Left cardiac atrium (tissue), 4 donors: ENCODE measurements at regions of chr11 and their contacts with region 1.

Region 1: DNA sequence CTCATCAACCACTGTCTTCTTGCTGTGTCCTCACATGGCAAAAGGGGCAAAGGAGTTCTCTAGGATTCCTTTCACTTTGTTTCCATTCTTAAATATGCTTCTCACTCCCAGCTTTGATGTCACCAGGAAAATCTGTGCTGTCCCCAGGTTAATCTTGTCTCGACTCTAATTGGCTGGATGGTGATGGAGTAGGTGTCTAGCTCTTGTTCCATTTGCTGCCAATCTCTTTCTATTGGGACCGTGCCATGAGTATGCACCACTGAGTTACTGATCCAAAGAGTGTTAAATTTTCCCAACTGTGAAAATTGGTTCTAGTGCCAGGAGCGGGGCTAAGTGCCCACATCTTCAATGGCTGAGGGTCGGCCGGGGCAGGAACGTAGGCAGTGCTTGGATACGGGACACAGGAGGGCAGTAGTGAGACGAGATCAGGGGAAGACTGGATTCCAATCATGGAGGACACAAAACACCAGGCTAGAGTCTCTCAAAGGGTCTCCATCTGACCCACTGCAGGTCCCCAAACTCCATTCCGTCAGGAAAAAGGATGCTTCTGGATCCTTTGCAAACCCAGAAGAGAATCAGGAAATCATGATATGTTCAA is 47.7 kb upstream of the CSNK2A3 start:
- DNase-seq: no peak
- ATAC-seq: no peak

Region 2: DNA sequence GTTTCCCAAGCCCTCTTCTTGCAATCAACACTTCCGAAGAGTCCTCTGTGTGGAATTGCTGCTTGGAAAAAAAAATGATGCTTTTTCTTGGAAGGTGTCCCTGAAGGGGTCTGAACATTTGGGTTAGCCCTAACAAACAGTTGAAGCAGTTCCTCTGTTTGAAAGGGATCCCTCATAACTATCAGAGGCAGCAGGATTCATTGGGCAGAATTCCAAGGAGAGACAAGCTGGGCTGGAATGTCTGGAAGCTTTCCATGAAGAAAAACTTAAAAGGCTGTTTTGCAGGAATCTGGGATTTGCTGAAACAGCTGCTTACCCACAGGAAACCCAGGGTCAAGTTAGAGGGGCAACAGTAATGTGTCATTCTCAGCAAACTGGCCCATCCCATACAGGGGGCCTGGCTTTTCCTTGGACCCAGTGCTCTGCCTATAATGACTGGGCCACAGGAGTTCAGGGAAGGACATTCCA is 50.8 kb before region 1 on chr11:
- intact Hi-C with region 1: no loop called
- DNase-seq: peak; percentile 31
- ATAC-seq: peak; percentile 32 to 72

Region 3: GRCh38 chr11:11510939-11511338 is 110.2 kb after region 1 on chr11:
- intact Hi-C with region 1: loop called in 1 of 2 experiments (anchors 10 kb)
- DNase-seq: peak; percentile 48
- ATAC-seq: peak; percentile 74 to 87

Region 4: GRCh38 chr11:11787305-11788062 is 386.8 kb after region 1 on chr11:
- intact Hi-C with region 1: loop called in 1 of 2 experiments (anchors 5 kb)
- DNase-seq: peak; percentile 71
- ATAC-seq: peak; percentile 93